ENCODE measurements at regions of chr20 and their contacts with region 1.

Region 1: GRCh38 chr20:62861726-62862336 is at the start of gene TCFL5:
- DNase-seq: peak; percentile 56 to 97
- H3K4me3 ChIP-seq: peak within 1 kb of the TSS; percentile 54
- H3K27ac ChIP-seq: no peak within 1 kb of the TSS
- H3K4me1 ChIP-seq: peaks cover 16% of the 10 kb centered on the region
- H3K27me3 ChIP-seq: no peaks in the 10 kb centered on the region
- CTCF ChIP-seq: no peak
- total RNA-seq, gene TCFL5: 29.3 and 35.4 TPM in 2 replicates

Region 2: DNA sequence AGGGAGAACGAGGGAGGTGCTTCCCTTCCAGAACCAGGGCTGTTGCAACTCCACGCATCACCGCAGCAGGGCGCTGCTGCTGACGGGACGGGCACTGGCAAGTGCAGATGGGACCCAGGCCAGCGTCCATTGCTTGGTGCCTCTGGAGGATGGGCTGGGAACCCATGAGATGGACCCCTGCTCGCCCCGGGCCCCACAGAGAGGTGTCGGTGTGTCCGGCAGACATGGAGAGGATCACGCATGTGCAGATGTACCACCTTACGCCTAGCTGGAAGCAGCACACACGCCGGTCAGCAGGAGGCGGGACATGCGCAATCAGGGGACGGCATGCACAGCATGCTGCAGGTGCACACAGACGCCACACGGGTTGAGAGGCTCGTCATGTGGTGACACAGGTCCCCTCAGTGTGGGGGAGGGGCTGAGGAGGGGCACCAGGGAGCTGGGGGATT is 460.5 kb before region 1 on chr20:
- CTCF ChIA-PET with region 1: interaction called, 12 read pairs
- POLR2A ChIA-PET with region 1: no interaction called
- intact Hi-C with region 1: no loop called
- DNase-seq: no peak
- H3K4me3 ChIP-seq: no peak overlapping the region
- H3K27ac ChIP-seq: no peak overlapping the region
- H3K4me1 ChIP-seq: peaks cover 10% of the 10 kb centered on the region
- H3K27me3 ChIP-seq: no peaks in the 10 kb centered on the region
- CTCF ChIP-seq: no peak

Region 3: DNA sequence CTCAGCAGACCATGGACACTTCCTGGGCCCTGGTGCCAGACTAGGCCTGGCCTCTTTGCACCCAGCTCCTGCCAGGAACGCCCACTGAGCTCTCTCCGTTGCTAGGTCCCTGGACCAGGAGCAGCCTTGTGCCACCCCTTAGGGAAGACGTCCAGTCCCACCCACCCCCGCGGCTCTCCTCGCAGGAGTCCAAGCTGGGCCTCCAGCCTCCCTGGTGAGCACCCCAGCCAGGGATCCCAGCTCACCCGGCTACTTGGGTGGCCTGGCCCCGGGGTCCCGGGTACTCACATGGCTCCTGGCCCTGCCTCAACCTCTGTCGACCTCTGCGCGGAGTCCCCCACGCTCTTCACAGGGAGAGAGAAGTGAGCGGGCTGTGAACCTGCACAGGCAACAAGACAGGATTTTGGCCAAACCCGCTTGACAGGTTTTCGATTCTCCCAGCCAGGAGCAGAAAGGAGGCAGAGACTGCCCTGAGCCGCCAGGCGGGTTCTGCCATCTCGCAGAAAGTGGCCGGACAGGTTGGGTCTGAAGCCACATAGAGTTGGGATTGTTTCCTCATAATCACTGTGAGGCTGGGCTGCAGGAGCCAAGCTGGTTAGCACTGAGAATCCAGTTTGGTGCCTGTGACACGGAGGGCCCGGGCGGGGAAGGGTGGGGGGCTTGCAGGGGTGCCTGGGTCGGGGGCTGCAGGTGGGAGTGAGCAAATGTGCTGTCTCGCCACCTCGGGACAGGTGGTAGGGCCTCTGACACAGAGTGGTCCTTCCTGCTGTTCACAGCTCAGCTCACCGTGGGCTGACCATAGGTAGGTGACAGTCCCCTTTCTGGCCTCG is 434.4 kb before region 1 on chr20 and contains the start of gene RBBP8NL:
- CTCF ChIA-PET with region 1: no interaction called
- POLR2A ChIA-PET with region 1: no interaction called
- intact Hi-C with region 1: no loop called
- DNase-seq: peak; percentile 97 to 98
- H3K4me3 ChIP-seq: peak within 1 kb of the TSS; percentile 64
- H3K27ac ChIP-seq: peak within 1 kb of the TSS; percentile 45
- H3K4me1 ChIP-seq: peaks cover 38% of the 10 kb centered on the region
- H3K27me3 ChIP-seq: no peaks in the 10 kb centered on the region
- CTCF ChIP-seq: peak; percentile 60
- total RNA-seq, gene RBBP8NL: 8.7 and 14.0 TPM in 2 replicates

Region 4: DNA sequence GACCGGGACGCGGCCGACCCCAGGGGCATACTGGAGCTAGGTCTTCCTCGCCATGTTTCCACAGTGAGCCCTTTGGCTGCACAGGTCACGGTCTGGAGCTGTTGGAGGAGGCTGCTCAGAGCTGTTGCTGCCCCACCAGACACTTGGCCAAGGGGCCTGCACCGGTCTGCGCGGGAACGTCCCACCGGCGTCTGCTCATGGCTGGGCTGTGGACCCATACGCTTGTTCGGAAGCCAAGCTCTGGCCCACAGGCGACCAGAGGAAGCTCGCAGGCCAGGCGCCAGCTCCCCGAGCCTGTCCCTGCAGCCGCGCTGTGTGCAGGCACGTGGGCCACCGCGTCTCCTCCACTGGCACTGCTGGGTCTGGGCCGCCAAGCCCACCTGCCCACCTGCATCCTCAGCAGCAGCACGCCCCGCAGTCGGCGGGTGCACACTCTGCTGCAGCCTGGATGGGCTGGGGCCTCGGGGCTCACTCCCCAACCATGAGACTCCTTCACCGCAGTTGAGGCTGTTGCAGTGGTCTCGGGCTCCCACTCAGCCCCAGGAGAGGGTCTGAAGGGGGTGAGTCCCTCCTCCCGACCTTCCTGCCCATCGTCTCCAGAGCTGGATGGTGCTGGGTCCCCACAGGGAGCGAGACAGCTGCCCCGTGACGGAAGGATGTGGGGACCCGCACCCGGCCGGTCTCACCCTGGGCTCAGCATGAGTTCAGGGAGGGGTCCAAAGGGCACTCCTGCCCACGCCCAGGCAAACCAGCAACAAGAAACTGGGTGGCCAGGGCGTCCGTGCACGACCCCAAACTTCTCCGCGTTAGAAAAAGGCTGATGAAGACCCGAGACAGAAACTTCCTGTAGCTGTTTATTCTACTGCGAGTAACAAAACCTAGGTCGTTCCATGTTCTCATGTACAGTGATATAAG is 15.3 kb after region 1 on chr20:
- CTCF ChIA-PET with region 1: interaction called, 13 read pairs
- POLR2A ChIA-PET with region 1: no interaction called
- intact Hi-C with region 1: no loop called
- DNase-seq: peak in 1 of 2 experiments; percentile 10
- H3K4me3 ChIP-seq: no peak overlapping the region
- H3K27ac ChIP-seq: no peak overlapping the region
- H3K4me1 ChIP-seq: peaks cover 9% of the 10 kb centered on the region
- H3K27me3 ChIP-seq: no peaks in the 10 kb centered on the region
- CTCF ChIP-seq: no peak

Region 5: DNA sequence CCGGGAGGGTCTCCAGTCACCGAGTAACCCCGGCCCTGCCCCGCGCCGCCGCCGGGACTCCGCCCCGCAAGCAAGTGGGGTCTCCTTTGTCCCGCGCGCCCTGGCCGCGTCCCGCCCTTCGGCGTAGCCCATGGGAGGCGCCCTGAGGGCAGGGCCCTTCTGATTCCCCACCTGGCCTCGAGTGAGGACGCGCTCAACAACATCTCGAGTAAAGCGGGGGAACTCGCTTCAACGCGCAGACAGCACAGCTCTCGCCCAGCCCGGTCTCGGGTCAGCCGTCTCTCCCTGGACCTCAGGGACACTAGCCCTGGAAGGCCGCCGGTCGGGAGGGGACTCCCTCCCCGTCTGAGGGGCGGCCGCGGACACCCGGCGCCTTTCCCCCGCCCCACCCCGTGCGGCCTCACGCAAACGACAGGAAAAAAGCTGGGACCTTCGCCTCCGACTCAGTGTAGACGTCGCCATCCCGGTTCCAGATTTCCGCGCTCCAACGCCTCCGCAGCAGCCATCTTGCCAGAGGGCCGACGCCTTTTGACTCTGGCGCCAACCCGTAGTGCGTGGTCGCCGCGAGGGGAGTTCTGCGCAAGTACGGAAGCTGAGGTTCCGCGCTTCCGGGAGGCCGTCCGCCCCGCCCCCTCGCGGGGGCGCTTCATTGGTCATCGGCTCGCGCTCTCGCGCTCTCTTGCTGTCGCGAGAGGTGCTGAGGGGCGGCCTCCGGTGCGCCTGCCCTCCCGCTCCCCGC is 75.7 kb after region 1 on chr20:
- CTCF ChIA-PET with region 1: no interaction called
- POLR2A ChIA-PET with region 1: no interaction called
- intact Hi-C with region 1: loop called (anchors 5 kb)
- DNase-seq: peak; percentile 87 to 98
- H3K4me3 ChIP-seq: peak overlapping the region; percentile 99
- H3K27ac ChIP-seq: peak overlapping the region; percentile 67
- H3K4me1 ChIP-seq: peaks cover 19% of the 10 kb centered on the region
- H3K27me3 ChIP-seq: no peaks in the 10 kb centered on the region
- CTCF ChIP-seq: no peak

Region 6: GRCh38 chr20:63216041-63216848 is 354.4 kb after region 1 on chr20 and contains the start of gene YTHDF1:
- CTCF ChIA-PET with region 1: no interaction called
- POLR2A ChIA-PET with region 1: interaction called, 13 read pairs
- intact Hi-C with region 1: no loop called
- DNase-seq: peak; percentile 90 to 99
- H3K4me3 ChIP-seq: peak within 1 kb of the TSS; percentile 95
- H3K27ac ChIP-seq: peak within 1 kb of the TSS; percentile 31; the same call in 1 of the 2 replicates
- H3K4me1 ChIP-seq: peaks cover 23% of the 10 kb centered on the region
- H3K27me3 ChIP-seq: peaks cover 17% of the 10 kb centered on the region
- CTCF ChIP-seq: no peak
- total RNA-seq, gene YTHDF1: 34.5 and 42.6 TPM in 2 replicates